ENCODE measurements at regions of chr19 and their contacts with region 1.

Region 1: DNA sequence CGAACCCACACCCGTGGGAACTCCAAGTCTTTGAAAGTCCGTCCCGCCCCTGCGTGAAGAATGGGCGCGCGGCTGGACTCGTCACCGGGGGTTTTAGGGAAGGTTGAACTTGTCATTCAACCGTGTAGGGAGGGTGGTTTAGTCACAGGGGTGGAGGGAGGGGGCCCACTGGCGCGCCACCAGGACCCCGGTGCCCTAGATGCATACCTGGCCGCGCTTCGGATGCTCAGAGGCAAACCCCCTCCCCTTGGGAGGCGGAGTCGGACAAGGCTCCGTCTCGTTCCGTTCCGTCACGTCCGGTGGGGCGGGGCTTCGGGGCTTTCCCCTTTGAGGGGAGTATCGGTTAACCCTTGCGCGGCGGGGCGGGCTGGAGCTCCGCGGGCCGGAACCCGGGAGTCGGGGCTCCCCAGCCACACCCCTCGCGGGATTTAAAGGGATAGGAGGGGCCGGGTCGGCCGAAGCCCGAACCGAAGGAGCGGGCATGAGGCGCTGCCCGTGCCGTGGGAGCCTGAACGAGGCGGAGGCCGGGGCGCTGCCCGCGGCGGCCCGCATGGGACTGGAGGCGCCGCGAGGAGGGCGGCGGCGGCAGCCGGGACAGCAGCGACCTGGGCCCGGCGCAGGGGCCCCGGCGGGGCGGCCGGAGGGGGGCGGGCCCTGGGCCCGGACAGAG is at the starts of genes COQ8B and ITPKC:
- DNase-seq: peak; percentile 99 to 100 (median 100)
- H3K4me3 ChIP-seq: peak within 1 kb of the TSS; percentile 61 to 97 (median 83)
- H3K27ac ChIP-seq: peak within 1 kb of the TSS; percentile 75 to 98 (median 95)
- H3K27me3 ChIP-seq: no peaks in the 10 kb centered on the region
- CTCF ChIP-seq: peak in 28 of 56 donors; percentile 9 to 42 (median 20)
- total RNA-seq, gene COQ8B: 22.8 to 64.2 (median 35.5) TPM
- total RNA-seq, gene ITPKC: 6.6 to 73.8 (median 12.0) TPM

Region 2: DNA sequence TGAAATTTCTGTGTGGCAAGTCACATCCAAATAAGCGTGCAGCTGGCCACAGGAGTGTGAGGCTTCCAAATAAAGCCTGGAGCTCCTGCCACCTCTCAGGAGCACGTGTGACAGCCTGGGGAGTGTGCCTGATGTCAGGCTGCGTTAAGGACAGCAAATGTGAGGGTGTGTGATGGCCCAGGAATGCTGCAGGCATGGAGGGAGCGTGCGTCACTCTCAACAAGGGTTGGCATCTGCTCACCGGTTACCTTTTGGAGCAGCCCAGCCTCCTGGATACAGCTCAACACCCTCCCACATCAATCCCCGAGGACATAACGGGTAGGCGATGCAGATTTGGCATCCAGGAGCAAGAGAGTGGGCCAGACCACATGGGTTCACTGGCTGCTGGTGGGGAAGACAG is 45.4 kb before region 1 on chr19:
- intact Hi-C with region 1: loop called (anchors 1 kb)
- DNase-seq: peak in 9 of 10 donors; percentile 50 to 85 (median 74)
- H3K4me3 ChIP-seq: no peak overlapping the region
- H3K27ac ChIP-seq: peak overlapping the region in 8 of 59 donors; percentile 12 to 63 (median 42)
- H3K27me3 ChIP-seq: no peaks in the 10 kb centered on the region
- CTCF ChIP-seq: no peak

Region 3: DNA sequence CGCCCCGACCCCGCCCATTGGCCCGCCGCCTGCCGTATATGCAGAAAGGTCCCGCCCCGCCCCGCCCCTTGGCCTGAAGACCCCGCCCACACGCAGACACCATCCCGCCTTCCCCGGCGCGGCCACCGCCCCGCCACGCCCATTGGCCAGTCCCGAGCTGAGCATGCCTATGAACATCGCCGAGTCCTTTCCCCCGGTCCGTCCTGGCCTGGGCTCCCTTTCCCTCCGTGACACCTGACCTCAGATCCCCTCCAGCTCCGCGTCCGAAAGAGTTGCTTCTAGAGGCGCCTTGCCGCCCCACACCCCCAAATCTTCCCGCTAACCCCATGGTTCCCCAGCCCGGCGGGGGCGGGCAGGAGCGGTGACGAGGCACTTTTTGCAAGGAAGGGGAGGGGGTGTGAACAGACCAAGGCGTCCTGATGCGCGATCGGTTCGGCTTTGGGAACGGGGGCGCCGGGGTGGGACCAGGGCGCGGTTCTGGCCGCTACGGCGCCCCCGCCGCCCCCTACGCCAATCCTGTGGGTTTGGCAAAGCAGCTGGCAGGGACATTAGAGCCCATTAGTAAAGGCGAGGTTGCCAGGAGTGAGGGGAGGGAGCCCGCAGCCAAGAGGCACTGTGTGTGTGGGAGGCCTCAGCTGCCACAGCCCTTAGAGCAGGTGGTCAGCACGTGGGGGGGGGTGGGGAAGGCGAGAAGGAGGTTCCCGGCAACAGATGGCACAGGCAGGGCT is 25.9 kb before region 1 on chr19:
- intact Hi-C with region 1: loop called (anchors 1 to 2 kb)
- DNase-seq: peak; percentile 90 to 96 (median 92)
- H3K4me3 ChIP-seq: peak overlapping the region; percentile 51 to 90 (median 75)
- H3K27ac ChIP-seq: peak overlapping the region in 57 of 59 donors; percentile 43 to 93 (median 85)
- H3K27me3 ChIP-seq: no peaks in the 10 kb centered on the region
- CTCF ChIP-seq: peak in 2 of 56 donors; percentile 13 to 27

Region 4: DNA sequence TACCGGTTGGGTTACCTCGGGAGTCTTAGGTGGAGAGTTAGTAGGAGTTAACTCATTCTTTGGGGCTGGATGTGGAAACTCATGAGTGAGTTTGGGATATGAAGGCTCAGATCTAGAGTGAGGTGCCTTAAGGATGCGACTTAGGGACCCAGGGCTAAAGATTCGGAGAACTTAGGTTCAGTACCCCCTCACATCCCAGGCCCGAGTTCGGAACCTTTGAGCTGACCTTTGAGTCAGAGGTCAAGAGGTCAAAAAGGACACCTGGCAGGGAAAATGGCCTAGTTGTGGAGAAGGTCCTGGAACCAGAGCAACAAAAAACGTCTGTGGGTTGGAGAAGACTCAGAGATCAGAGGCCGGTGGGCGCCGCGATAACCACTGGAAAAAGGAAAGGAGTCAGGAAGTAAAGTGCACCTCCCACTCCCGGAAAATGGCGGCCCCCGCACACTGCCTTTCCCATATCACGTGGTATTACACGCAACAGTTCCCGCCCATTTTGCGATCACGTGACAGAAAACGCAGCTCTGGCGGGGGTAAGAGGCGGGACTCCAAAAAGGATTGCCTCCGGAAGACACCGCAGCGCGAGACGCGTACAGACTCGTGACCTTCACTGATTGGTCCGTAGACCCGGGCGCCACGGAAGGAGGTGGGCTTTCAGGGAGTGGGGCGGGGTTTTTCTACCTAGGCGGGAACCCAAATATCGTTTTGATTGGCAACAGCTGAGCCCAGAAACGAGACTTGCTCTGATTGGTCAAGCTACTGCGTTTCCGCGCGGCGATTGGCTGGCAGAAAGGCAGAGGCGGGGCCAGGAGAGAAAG is 33.5 kb after region 1 on chr19 and contains the start of gene ACTMAP:
- intact Hi-C with region 1: loop called (anchors 2 kb)
- DNase-seq: peak; percentile 99 to 100 (median 100)
- H3K4me3 ChIP-seq: peak within 1 kb of the TSS; percentile 60 to 99 (median 81)
- H3K27ac ChIP-seq: peak within 1 kb of the TSS; percentile 76 to 98 (median 94)
- H3K27me3 ChIP-seq: no peaks in the 10 kb centered on the region
- CTCF ChIP-seq: peak in 5 of 56 donors; percentile 4 to 23 (median 14)
- total RNA-seq, gene ACTMAP: 1.4 to 15.4 (median 5.6) TPM

Region 5: DNA sequence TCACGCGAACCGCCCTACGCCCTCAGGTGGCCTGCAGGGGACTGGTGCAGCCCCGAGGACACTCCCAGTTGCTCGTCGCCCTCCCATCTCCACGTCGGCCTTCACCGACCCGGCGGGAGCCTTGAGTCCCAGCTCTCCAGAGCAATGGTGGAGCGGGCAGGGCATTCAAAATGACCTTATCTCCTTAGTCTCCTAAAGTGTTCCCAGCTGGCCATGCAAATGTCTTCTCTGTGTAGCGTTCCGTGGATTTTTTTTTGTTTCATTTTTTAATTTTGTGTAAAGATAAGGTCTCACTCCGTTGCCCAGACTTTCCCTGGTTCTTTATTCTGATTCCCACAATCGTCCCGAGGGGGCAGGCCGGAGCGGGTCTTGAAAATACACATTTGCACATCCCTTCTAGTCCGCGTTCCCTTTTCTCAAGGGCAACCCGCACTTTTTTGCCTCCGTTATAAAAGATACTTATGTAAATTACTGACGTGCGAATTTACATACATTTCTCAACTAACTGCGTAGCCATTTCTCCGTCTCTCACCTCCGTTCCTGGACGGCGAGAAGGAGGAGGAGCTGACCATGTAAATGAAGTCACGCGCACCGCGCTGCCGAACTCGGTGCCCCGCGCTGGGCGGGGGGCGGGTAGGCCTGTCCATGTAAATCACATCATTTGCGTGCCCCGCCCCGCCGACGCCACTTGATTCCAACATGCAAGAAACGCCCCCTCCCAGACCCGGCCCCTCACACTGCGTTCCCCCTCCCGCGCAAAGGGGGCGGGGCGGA is 81.6 kb after region 1 on chr19:
- intact Hi-C with region 1: loop called in 1 of 2 experiments (anchors 5 kb)
- DNase-seq: peak; percentile 99 to 100 (median 100)
- H3K4me3 ChIP-seq: peak overlapping the region; percentile 38 to 99 (median 93)
- H3K27ac ChIP-seq: peak overlapping the region; percentile 79 to 99 (median 96)
- H3K27me3 ChIP-seq: no peaks in the 10 kb centered on the region
- CTCF ChIP-seq: peak; percentile 13 to 68 (median 48)

Region 6: GRCh38 chr19:40806488-40807468 is 90.0 kb after region 1 on chr19:
- intact Hi-C with region 1: loop called (anchors 5 kb)
- DNase-seq: peak; percentile 81 to 98 (median 92)
- H3K4me3 ChIP-seq: peak overlapping the region in 57 of 59 donors; percentile 3 to 65 (median 40)
- H3K27ac ChIP-seq: peak overlapping the region; percentile 68 to 99 (median 96)
- H3K27me3 ChIP-seq: no peaks in the 10 kb centered on the region
- CTCF ChIP-seq: peak; percentile 78 to 98 (median 93)